ENCODE measurements at regions of chr18 and their contacts with region 1.

Region 1: GRCh38 chr18:46660955-46661749 is 4.1 kb upstream of the LOXHD1 start:
- DNase-seq: no peak
- H3K4me3 Mint-ChIP-seq: no peak overlapping the region
- H3K27ac Mint-ChIP-seq: no peak overlapping the region
- H3K4me1 Mint-ChIP-seq: no peaks in the 10 kb centered on the region
- H3K27me3 Mint-ChIP-seq: peaks cover 3% of the 10 kb centered on the region

Region 2: GRCh38 chr18:46148810-46149209 is 512.3 kb before region 1 on chr18:
- intact Hi-C with region 1: loop called (anchors 1 kb)
- DNase-seq: peak; percentile 33
- H3K4me3 Mint-ChIP-seq: no peak overlapping the region
- H3K27ac Mint-ChIP-seq: no peak overlapping the region
- H3K4me1 Mint-ChIP-seq: peaks cover 24% of the 10 kb centered on the region
- H3K27me3 Mint-ChIP-seq: no peaks in the 10 kb centered on the region

Region 3: DNA sequence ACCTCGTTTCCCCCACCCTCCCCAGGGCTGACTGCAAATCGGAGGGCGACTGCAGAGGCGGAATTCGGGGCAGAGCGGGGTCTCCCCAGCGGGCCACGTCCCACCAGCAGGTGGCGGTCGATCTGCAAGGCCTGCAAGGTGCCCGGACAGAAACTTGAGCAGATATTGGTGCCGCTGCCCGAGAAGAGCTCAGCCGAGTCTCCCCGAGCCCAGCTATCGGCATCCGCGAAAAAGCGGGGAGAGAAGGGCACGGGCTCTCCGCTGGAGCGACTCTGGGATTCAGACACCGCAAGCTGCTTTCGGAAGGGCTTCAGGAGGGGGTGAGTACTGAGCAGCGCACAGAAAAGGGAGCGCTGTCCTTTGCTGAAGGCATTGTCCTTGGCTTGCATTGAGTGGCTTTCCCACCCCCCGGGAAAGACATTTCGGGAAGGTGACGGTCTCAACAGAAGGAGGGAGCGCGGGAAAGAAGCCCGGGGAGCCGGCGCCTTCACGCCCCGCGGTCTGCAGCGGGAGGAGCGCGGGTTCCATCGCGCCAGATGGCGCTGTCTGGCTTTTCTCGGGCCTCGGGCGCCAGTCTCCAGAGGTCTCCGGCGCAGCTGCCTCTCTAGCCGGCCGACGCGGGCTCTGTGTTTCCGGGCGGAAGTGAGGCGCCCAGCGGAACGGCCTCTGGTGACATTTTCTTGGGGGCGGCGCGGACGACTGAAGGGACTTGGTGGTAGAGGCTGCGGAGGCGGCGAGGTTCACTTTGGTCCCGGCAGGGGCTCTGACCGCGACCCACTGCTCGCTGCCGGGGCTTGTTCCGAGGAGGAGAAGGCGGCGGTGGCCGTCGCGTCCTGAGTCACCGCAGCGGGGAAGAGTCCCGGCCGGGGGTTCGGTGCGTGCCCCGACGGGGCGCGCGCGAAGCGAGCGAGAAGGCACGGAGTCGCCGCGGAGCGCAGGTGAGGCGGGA is 487.5 kb before region 1 on chr18:
- intact Hi-C with region 1: loop called (anchors 1 kb)
- DNase-seq: peak; percentile 90
- H3K4me3 Mint-ChIP-seq: peak overlapping the region; percentile 96
- H3K27ac Mint-ChIP-seq: peak overlapping the region; percentile 99
- H3K4me1 Mint-ChIP-seq: peaks cover 47% of the 10 kb centered on the region
- H3K27me3 Mint-ChIP-seq: no peaks in the 10 kb centered on the region

Region 4: GRCh38 chr18:46281185-46282176 is 379.7 kb before region 1 on chr18:
- intact Hi-C with region 1: loop called (anchors 2 kb)
- DNase-seq: peak; percentile 46
- H3K4me3 Mint-ChIP-seq: no peak overlapping the region
- H3K27ac Mint-ChIP-seq: no peak overlapping the region
- H3K4me1 Mint-ChIP-seq: peaks cover 11% of the 10 kb centered on the region
- H3K27me3 Mint-ChIP-seq: no peaks in the 10 kb centered on the region

Measured in activated T-helper 2 cell treated with anti-CD3 and anti-CD28 coated beads, Interferon-gamma antibody, Interleukin-2, Interleukin-4, amounts not matched to agents 10 μg/mL and 5 μg/mL and 100 μg/mL, durations not matched to agents 14 hours and 24 hours and 36 hours (primary cell).